ENCODE measurements at regions of chr18 and their contacts with region 1.

Region 1: DNA sequence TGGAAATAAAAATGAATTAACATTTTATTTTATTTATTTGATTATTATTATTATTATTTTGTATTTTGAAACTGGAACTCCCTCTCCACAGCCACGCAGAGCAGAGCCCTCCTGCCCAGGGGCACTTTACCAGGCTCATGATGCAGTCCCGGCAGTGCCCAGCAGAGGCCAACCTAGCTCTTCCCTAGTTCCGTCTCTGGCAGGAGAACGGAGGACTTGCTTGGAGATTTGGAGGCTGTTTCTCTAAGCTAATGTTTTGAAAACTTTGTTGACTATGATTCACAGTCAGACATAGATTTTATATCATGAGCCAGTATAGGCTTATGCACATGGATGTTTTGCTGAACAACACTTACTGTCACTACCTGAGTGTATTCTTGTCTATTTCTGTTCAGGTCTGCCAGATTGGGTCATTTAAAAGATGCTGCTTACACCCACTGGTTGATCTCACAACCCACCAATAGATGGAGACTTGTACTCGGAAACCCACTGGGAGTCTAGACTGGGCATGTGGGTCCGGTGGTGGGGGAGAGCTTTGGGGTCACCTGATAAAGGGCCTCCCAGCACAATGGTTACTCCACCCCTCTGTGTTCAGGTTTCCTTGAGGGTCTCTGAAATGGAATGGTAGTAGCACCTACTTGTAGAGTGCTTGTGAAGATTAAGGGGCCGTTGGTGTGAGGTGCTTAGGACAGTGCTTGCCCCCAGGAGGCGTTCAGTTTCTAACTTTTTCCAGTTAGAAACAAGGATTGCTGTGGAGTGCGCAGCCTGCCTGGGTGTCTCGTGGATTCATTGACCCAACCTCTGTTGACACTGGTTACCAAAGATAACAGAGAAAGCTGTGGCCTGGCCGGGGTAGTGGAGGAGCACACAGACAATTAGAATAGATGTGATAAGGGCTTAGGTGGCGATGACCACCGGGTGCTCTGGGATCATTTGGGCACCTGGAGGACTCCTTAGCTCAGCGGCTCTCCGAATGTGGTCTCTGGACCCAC is 177.3 kb downstream of the HAUS1 start:
- DNase-seq: peak; percentile 77
- H3K4me3 Mint-ChIP-seq: no peak overlapping the region
- H3K27ac Mint-ChIP-seq: no peak overlapping the region
- H3K4me1 Mint-ChIP-seq: peaks cover 17% of the 10 kb centered on the region
- H3K27me3 Mint-ChIP-seq: no peaks in the 10 kb centered on the region

Region 2: GRCh38 chr18:46215902-46216723 is 65.4 kb before region 1 on chr18:
- CTCF ChIA-PET with region 1: no interaction called
- POLR2A ChIA-PET with region 1: no interaction called
- intact Hi-C with region 1: no loop called
- DNase-seq: no peak
- H3K4me3 Mint-ChIP-seq: no peak overlapping the region
- H3K27ac Mint-ChIP-seq: peak overlapping the region; percentile 49
- H3K4me1 Mint-ChIP-seq: peaks cover 79% of the 10 kb centered on the region
- H3K27me3 Mint-ChIP-seq: no peaks in the 10 kb centered on the region

Region 3: DNA sequence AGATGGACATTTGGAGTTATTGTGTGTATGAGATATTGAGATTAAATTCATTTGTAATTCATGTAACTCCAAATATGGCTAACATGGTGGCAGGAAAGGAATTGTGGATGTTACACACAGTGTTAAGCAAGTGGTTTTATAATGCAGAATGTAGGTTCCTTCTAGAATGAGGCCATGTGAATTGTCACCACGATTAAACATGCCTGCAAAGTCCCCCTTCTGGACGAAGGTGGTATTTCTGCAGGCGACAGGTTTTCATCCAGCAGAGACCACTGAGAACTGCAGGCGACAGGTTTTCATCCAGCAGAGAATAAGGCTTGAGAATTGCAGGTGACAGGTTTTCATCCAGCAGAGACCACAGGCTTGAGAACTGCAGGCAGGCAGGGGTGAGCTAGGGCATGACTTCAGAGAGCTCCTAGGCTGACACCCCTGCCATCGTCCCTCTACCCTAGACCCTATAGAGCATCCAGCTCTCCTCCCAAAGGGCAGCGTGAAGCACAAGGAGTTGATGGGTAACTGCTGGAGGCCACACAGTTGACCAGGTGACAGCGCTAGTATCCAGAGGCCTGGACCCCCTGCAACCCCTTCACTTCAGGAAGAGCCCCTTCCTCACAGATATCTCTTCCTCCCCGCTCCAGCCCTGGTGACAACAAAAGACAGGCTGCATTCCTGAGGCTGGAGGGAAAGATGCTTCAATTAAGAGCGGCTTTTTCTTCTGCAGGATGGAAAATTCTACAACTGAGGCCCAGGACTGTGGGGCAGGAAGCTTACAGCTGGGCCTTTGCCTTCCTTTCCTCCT is 199.8 kb after region 1 on chr18:
- CTCF ChIA-PET with region 1: interaction called, 68 read pairs
- POLR2A ChIA-PET with region 1: no interaction called
- intact Hi-C with region 1: loop called (anchors 2 kb)
- DNase-seq: peak; percentile 64
- H3K4me3 Mint-ChIP-seq: no peak overlapping the region
- H3K27ac Mint-ChIP-seq: no peak overlapping the region
- H3K4me1 Mint-ChIP-seq: no peaks in the 10 kb centered on the region
- H3K27me3 Mint-ChIP-seq: peaks cover 2% of the 10 kb centered on the region

Region 4: GRCh38 chr18:46497129-46497528 is 215.6 kb after region 1 on chr18:
- CTCF ChIA-PET with region 1: no interaction called
- POLR2A ChIA-PET with region 1: no interaction called
- intact Hi-C with region 1: no loop called
- DNase-seq: peak; percentile 51
- H3K4me3 Mint-ChIP-seq: no peak overlapping the region
- H3K27ac Mint-ChIP-seq: no peak overlapping the region
- H3K4me1 Mint-ChIP-seq: no peaks in the 10 kb centered on the region
- H3K27me3 Mint-ChIP-seq: peaks cover 1% of the 10 kb centered on the region

Region 5: DNA sequence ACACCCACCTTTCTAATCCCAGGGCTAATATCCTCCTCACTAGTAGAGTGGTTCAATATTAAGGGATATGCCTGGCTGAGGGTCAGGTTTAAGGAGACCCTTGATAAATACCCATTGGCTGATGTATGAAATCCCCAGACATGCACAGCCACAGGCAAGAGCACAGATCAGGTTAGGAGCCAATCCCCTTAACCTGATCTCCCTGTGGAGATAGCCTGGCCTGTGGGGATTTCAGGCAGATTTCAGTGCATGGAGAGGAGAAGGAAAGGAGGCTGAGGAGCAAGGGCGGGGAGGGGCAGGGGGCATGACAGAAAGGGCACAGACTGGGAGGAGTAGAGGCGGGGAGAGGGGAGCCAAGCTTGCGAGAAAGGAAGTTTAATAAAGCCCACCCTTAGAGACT is 246.6 kb after region 1 on chr18:
- CTCF ChIA-PET with region 1: no interaction called
- POLR2A ChIA-PET with region 1: no interaction called
- intact Hi-C with region 1: no loop called
- DNase-seq: no peak
- H3K4me3 Mint-ChIP-seq: no peak overlapping the region
- H3K27ac Mint-ChIP-seq: no peak overlapping the region
- H3K4me1 Mint-ChIP-seq: no peaks in the 10 kb centered on the region
- H3K27me3 Mint-ChIP-seq: peaks cover 6% of the 10 kb centered on the region

Measured in activated CD4-positive, alpha-beta memory T cell treated with anti-CD3 and anti-CD28 coated beads for 36 hours (primary cell).